ENCODE measurements at regions of chr19 and their contacts with region 1.

Region 1: DNA sequence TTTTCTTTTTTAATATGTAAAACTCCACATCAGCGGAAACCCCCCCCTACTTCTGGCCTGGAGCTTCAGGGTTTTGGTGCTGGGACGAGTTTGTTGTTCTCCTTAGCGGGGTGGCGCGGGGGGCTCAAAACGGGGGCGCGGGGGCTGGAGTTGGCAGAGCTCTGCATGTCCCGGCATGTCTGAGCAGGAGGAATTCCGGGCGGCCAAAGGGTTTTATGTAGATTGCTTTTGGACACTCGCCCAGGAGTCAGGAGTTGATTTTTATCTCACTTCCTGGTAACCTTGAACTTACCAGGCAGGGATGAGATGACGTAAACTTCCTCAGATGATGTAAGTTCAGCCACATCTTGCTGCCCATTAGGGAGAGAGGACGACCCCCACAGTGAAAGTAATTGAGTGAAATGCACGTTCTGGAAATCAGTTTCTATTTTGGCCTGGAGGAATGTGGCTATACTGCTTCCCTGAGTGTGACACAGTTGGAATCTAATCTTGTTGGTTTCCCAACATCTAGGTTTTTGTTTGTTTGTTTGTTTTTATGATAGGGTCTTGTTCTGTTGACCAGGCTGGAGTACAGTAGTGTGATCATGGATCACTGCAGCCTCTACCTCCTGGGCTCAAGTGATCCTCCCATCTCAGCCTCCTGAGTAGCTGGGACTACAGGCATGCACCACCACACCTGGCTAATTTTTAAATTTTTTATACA is 21.0 kb upstream of the GDF15 start:
- DNase-seq: no peak
- ATAC-seq: no peak
- H3K4me3 Mint-ChIP-seq: no peak overlapping the region
- H3K27ac Mint-ChIP-seq: peak overlapping the region; percentile 67
- H3K4me1 Mint-ChIP-seq: peaks cover 8% of the 10 kb centered on the region
- H3K27me3 Mint-ChIP-seq: no peaks in the 10 kb centered on the region

Region 2: DNA sequence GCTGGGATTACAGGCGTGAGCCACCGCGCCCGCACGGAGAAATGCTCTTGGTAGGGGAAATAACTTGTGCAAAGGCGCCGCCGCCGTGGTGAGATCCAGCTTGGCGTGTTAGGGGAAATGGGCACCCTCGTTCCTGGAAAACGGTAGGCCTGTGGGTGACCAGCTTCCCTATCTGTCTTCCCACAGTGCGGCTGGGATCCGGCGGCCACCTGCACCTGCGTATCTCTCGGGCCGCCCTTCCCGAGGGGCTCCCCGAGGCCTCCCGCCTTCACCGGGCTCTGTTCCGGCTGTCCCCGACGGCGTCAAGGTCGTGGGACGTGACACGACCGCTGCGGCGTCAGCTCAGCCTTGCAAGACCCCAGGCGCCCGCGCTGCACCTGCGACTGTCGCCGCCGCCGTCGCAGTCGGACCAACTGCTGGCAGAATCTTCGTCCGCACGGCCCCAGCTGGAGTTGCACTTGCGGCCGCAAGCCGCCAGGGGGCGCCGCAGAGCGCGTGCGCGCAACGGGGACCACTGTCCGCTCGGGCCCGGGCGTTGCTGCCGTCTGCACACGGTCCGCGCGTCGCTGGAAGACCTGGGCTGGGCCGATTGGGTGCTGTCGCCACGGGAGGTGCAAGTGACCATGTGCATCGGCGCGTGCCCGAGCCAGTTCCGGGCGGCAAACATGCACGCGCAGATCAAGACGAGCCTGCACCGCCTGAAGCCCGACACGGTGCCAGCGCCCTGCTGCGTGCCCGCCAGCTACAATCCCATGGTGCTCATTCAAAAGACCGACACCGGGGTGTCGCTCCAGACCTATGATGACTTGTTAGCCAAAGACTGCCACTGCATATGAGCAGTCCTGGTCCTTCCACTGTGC is 23.4 kb after region 1 on chr19:
- CTCF ChIA-PET with region 1: interaction called, 21 read pairs
- POLR2A ChIA-PET with region 1: no interaction called
- intact Hi-C with region 1: no loop called
- DNase-seq: peak; percentile 88
- ATAC-seq: peak; percentile 86
- H3K4me3 Mint-ChIP-seq: peak overlapping the region; percentile 67
- H3K27ac Mint-ChIP-seq: no peak overlapping the region
- H3K4me1 Mint-ChIP-seq: peaks cover 4% of the 10 kb centered on the region
- H3K27me3 Mint-ChIP-seq: peaks cover 45% of the 10 kb centered on the region

Region 3: GRCh38 chr19:18408053-18408476 is 43.1 kb after region 1 on chr19:
- CTCF ChIA-PET with region 1: no interaction called
- POLR2A ChIA-PET with region 1: no interaction called
- intact Hi-C with region 1: no loop called
- DNase-seq: peak; percentile 69
- ATAC-seq: peak; percentile 20
- H3K4me3 Mint-ChIP-seq: no peak overlapping the region
- H3K27ac Mint-ChIP-seq: no peak overlapping the region
- H3K4me1 Mint-ChIP-seq: no peaks in the 10 kb centered on the region
- H3K27me3 Mint-ChIP-seq: peaks cover 7% of the 10 kb centered on the region

Region 4: GRCh38 chr19:18419195-18419698 is 54.3 kb after region 1 on chr19 and contains the start of gene SSBP4:
- CTCF ChIA-PET with region 1: no interaction called
- POLR2A ChIA-PET with region 1: no interaction called
- intact Hi-C with region 1: no loop called
- DNase-seq: peak; percentile 82
- ATAC-seq: peak; percentile 45
- H3K4me3 Mint-ChIP-seq: peak within 1 kb of the TSS; percentile 90
- H3K27ac Mint-ChIP-seq: peak within 1 kb of the TSS; percentile 80
- H3K4me1 Mint-ChIP-seq: peaks cover 79% of the 10 kb centered on the region
- H3K27me3 Mint-ChIP-seq: peaks cover 23% of the 10 kb centered on the region
- total RNA-seq, gene SSBP4: 71.7 to 79.3 TPM